Activated CD4-positive, alpha-beta T cell treated with anti-CD3 and anti-CD28 coated beads for 36 hours (primary cell): ENCODE measurements at regions of chr9 and their contacts with region 1.

Region 1: GRCh38 chr9:129413537-129414376 is 207.1 kb downstream of the C9orf50 start:
- DNase-seq: peak; percentile 99
- ATAC-seq: peak; percentile 89
- H3K4me3 Mint-ChIP-seq: peak overlapping the region; percentile 75
- H3K27ac Mint-ChIP-seq: peak overlapping the region; percentile 94
- H3K4me1 Mint-ChIP-seq: peaks cover 23% of the 10 kb centered on the region
- H3K27me3 Mint-ChIP-seq: no peaks in the 10 kb centered on the region

Region 2: DNA sequence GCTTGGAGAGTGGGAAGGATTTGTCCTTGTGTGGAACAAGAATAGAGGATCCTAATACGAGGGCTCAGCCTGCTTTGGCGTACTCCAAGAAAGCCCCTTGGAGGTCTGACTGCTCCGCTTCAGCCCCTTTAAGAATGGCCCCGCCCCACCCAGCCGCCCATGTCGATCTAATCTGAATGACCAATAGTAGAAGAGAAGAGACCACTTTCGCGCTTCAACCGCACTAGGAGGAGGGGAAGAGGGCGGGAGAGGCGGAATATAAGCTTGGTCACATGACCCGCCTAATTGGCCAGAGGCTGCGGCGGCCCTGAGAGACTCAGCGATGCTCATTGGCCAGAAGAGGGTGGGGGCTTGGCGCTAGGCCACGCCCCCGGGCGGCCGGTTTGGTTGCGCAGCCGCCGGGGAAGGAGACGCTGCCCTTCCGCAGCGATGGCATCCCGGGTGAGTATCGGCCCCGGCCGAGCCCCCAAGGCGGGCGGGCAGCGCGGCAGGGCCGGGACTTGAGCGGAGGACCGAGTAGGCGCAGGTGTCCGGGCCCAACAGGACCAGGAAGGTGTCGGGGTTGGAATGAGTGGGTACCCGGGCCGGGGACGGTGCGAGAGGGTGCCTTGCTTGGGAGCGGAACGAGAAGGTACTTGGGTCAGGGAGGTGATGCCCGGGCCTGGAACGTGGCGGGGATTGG is 377.4 kb before region 1 on chr9 and contains the start of gene MIGA2:
- CTCF ChIA-PET with region 1: no interaction called
- POLR2A ChIA-PET with region 1: no interaction called
- intact Hi-C with region 1: loop called in 1 of 2 experiments (anchors 1 kb)
- DNase-seq: peak; percentile 96
- ATAC-seq: peak; percentile 99
- H3K4me3 Mint-ChIP-seq: peak within 1 kb of the TSS; percentile 98
- H3K27ac Mint-ChIP-seq: peak within 1 kb of the TSS; percentile 83
- H3K4me1 Mint-ChIP-seq: peaks cover 27% of the 10 kb centered on the region
- H3K27me3 Mint-ChIP-seq: no peaks in the 10 kb centered on the region
- total RNA-seq, gene MIGA2: 15.7 to 25.8 TPM

Region 3: DNA sequence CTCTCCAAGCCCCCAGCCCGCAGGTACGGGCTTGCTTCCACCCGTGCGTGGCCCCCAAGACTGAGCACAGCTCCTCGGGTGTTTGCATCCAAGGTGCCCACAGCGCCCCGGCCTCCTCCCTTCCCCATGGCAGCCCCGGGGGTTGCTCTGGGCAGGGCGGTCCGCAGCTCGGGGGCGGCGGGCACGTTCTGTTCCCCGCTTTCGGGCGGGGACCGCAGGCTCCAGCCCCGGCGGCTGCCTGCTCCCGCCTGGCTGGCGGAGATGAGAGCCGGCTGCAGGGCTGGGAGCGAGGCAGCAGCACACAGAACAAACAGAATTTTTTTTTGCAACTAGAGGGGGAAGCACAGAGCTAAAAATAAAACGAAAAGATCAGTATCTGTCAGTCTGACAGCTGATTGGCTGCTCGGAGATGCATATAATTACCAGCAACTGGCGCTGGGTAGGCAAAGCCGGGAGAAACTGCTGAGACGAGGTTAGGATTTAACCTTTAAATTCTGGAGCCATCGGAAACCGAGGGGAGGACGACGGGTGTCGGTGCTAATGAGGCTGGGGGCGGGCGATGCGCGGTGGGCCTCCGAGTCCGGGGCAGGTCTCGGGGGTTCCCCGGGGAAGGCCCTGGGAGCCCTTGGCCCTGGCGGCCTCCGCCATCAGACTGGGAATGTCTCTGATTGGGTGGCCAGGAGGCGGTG is 93.0 kb before region 1 on chr9:
- CTCF ChIA-PET with region 1: interaction called, 4 read pairs
- POLR2A ChIA-PET with region 1: no interaction called
- intact Hi-C with region 1: loop called in 1 of 2 experiments (anchors 5 kb)
- DNase-seq: peak; percentile 71
- ATAC-seq: peak; percentile 84
- H3K4me3 Mint-ChIP-seq: peak overlapping the region; percentile 62
- H3K27ac Mint-ChIP-seq: peak overlapping the region; percentile 78
- H3K4me1 Mint-ChIP-seq: peaks cover 24% of the 10 kb centered on the region
- H3K27me3 Mint-ChIP-seq: no peaks in the 10 kb centered on the region

Region 4: GRCh38 chr9:129460323-129461261 is 46.8 kb after region 1 on chr9:
- CTCF ChIA-PET with region 1: no interaction called
- POLR2A ChIA-PET with region 1: no interaction called
- intact Hi-C with region 1: loop called in 1 of 2 experiments (anchors 1 kb)
- DNase-seq: peak; percentile 96
- ATAC-seq: peak; percentile 87
- H3K4me3 Mint-ChIP-seq: peak overlapping the region; percentile 72
- H3K27ac Mint-ChIP-seq: peak overlapping the region; percentile 92
- H3K4me1 Mint-ChIP-seq: peaks cover 38% of the 10 kb centered on the region
- H3K27me3 Mint-ChIP-seq: no peaks in the 10 kb centered on the region

Region 5: DNA sequence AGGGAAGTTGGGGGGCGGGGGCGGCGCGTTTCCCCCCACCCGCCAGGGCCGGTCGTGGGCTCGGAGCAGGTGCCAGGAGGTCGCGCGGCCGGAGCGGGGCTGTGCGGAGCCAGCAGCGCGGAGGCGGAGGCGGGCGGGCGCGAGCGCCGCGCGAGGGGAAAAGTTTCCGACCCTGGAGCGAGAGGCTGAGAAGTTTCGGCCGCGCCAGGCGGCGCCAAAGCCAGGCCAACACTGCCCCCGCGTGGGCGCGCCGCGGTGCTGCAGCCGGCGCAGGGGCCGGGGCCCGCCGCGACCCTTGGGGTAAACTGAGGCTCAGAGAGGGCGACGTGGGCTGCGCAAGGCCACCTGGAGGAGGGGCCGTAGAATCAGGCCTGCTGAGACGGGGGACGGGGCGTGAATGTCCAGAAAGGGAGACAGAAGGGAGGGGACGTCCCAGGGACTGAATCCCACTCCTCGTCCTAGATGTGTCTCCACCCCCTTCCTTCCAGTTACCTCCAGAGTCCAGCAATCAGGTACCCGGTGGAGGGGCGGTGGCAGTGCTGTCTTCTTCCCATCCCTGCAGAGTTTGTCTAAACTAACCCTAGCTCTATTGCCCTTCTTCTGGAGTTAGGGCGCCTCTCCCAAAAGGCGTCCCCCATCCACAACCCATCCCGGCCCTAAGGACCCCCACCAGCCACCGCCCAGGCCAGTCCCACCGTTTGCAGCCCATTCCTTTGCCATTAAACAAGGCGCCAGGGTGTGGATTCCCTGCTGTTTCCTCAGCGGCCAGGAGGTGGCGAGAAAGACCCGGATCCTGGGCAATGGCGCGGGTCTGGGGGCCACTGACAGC is 196.9 kb after region 1 on chr9:
- CTCF ChIA-PET with region 1: no interaction called
- POLR2A ChIA-PET with region 1: no interaction called
- intact Hi-C with region 1: loop called in 1 of 2 experiments (anchors 1 kb)
- DNase-seq: peak; percentile 85
- ATAC-seq: peak; percentile 63
- H3K4me3 Mint-ChIP-seq: peak overlapping the region; percentile 73
- H3K27ac Mint-ChIP-seq: peak overlapping the region; percentile 47
- H3K4me1 Mint-ChIP-seq: peaks cover 29% of the 10 kb centered on the region
- H3K27me3 Mint-ChIP-seq: no peaks in the 10 kb centered on the region

Region 6: GRCh38 chr9:129802851-129803675 is 389.3 kb after region 1 on chr9 and contains the start of gene TOR1B:
- CTCF ChIA-PET with region 1: no interaction called
- POLR2A ChIA-PET with region 1: interaction called, 4 read pairs
- intact Hi-C with region 1: loop called in 1 of 2 experiments (anchors 1 kb)
- DNase-seq: peak; percentile 95
- ATAC-seq: peak; percentile 92
- H3K4me3 Mint-ChIP-seq: peak within 1 kb of the TSS; percentile 81
- H3K27ac Mint-ChIP-seq: peak within 1 kb of the TSS; percentile 90
- H3K4me1 Mint-ChIP-seq: peaks cover 25% of the 10 kb centered on the region
- H3K27me3 Mint-ChIP-seq: no peaks in the 10 kb centered on the region
- total RNA-seq, gene TOR1B: 18.0 to 22.1 TPM